ENCODE measurements at regions of chr22 and their contacts with region 1.

Region 1: GRCh38 chr22:28766628-28767027 is 5.9 kb upstream of the CCDC117 start:
- DNase-seq: no peak
- H3K4me3 ChIP-seq: no peak overlapping the region
- H3K27ac ChIP-seq: no peak overlapping the region
- H3K4me1 ChIP-seq: no peaks in the 10 kb centered on the region
- H3K27me3 ChIP-seq: no peaks in the 10 kb centered on the region
- CTCF ChIP-seq: no peak
- EP300 ChIP-seq: no peak
- POLR2A ChIP-seq: no peak

Region 2: GRCh38 chr22:28750471-28750881 is 16.2 kb before region 1 on chr22:
- intact Hi-C with region 1: loop called (anchors 1 kb)
- DNase-seq: no peak
- H3K4me3 ChIP-seq: no peak overlapping the region
- H3K27ac ChIP-seq: no peak overlapping the region
- H3K4me1 ChIP-seq: no peaks in the 10 kb centered on the region
- H3K27me3 ChIP-seq: no peaks in the 10 kb centered on the region
- CTCF ChIP-seq: no peak
- EP300 ChIP-seq: no peak
- POLR2A ChIP-seq: no peak

Measured in esophagus muscularis mucosa (tissue), 4 donors.